ENCODE measurements at regions of chr15 and their contacts with region 1.

Region 1: DNA sequence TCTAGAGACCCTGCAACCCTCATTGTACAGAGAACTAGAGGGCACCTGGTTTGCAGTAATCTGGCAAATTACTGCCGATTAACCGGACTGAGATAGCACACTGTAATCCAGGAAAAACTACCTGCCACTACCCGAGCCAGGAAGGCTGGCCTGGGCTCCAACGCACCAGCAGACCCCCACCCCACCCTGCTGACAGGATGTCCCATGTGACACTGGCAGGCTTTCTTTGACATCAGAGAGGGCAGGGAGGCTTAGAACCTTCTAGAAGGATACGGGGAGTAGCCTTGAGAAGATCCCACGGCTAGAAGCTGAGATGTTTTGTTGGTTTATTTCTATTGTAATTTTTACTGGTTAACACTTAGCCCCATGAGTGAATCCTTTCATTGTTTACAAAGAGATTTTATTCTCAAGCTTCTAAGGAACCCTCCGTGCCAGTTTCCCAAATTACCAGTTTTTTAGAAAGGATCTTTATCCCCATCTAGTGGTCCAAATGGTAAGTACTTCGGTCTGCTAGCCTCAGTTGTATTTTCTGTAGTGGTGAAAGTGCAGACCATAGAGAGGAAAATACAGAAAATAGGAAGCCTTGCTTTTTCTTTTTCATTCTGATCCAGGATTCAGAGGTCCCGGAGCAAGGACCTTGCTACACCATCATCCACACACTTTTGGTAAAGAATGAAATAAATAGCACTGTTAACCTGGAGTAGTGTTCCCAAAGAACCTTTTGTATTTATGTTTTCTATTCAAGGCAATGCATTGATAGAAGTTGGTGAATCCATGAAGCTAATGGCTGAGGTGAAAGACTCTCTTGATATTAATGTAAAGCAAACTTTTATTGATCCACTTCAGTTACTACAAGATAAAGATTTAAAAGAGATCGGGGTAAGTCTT is 81.9 kb upstream of the ADAMTSL3 start:
- DNase-seq: no peak
- ATAC-seq: peak in 2 of 4 donors; percentile 69 to 80
- H3K4me3 ChIP-seq: no peak overlapping the region
- H3K27ac ChIP-seq: no peak overlapping the region
- H3K4me1 ChIP-seq: no peaks in the 10 kb centered on the region
- H3K27me3 ChIP-seq: no peaks in the 10 kb centered on the region
- CTCF ChIP-seq: peak in 3 of 4 donors; percentile 23 to 52 (median 35)

Region 2: GRCh38 chr15:83250801-83251200 is 321.3 kb before region 1 on chr15:
- intact Hi-C with region 1: loop called in 1 of 3 experiments (anchors 10 kb)
- DNase-seq: no peak
- ATAC-seq: no peak
- H3K4me3 ChIP-seq: no peak overlapping the region
- H3K27ac ChIP-seq: no peak overlapping the region
- H3K4me1 ChIP-seq: no peaks in the 10 kb centered on the region
- H3K27me3 ChIP-seq: peaks cover 0 to 9% (median 2%) of the 10 kb centered on the region in 4 donors
- CTCF ChIP-seq: no peak

Region 3: DNA sequence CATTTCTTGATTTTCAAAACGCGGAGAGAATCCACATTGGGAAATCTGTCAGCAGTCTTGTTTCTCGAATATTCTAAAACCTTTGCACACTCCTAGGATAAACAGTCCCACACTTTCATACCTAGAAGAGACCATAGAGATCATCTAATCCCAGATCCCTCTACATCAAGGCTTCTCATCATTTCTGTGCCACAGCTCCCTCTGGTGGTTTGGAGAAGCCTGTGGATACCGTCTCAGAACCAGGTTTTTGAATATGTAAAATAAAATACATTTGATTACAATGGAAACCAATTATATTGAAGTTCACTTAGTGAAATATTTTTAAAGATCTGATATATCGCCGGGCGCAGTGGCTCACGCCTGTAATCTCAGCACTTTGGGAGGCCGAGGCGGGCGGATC is 451.6 kb after region 1 on chr15:
- intact Hi-C with region 1: loop called in 1 of 3 experiments (anchors 10 kb)
- DNase-seq: peak in 1 of 6 donors; percentile 31
- ATAC-seq: peak in 2 of 4 donors; percentile 49 to 55
- H3K4me3 ChIP-seq: no peak overlapping the region
- H3K27ac ChIP-seq: no peak overlapping the region
- H3K4me1 ChIP-seq: peaks cover 0 to 5% (median 0%) of the 10 kb centered on the region in 3 donors
- H3K27me3 ChIP-seq: no peaks in the 10 kb centered on the region
- CTCF ChIP-seq: peak in 2 of 4 donors; percentile 16 to 28

Measured in pancreas (tissue), 10 donors.